ENCODE measurements at regions of chr12 and their contacts with region 1.

Region 1: DNA sequence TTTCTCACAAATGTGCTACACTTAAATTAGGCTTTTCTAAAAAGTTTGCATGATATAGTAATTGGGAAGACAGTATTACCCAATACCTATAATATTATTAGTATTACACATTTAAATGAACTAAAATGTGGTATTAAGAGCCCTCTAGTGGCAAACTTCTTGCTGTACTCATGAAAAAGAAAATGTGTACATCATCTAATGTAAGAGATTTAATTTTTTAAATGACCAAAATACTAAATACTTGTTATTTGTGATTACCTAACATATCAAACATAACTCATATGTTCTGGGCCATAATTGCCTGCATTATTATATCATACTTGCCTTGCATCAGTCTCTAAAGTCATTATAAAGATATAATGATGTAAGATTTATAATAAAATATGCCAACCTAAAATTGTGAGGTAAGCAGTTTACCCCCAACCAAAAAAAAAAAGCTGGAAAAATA is 64.2 kb downstream of the DNAI7 start:
- DNase-seq: peak; percentile 70

Region 2: GRCh38 chr12:24991209-24992049 is 139.3 kb before region 1 on chr12:
- in situ Hi-C with region 1: loop called (anchors 10 kb)
- DNase-seq: peak; percentile 76

Region 3: DNA sequence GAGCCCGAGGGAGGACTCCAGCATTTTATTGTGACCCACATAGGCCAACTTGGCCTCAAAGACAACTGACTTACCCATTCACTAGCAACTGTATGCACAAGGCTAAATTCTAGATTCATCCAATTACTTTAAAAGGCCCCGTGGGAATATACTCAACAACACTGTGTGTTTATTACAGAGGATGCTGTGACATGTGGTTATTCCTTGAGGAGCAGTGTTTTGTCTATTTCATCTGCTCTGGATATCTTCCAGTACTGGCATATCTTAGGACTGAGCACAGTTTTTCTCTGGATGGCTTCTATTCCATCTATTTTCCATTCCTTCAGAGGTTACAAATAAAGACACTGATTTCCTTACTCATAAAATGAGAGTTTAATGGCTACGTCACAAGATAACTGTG is 207.2 kb after region 1 on chr12:
- in situ Hi-C with region 1: no loop called
- DNase-seq: no peak